ENCODE measurements at regions of chr7 and their contacts with region 1.

Region 1: DNA sequence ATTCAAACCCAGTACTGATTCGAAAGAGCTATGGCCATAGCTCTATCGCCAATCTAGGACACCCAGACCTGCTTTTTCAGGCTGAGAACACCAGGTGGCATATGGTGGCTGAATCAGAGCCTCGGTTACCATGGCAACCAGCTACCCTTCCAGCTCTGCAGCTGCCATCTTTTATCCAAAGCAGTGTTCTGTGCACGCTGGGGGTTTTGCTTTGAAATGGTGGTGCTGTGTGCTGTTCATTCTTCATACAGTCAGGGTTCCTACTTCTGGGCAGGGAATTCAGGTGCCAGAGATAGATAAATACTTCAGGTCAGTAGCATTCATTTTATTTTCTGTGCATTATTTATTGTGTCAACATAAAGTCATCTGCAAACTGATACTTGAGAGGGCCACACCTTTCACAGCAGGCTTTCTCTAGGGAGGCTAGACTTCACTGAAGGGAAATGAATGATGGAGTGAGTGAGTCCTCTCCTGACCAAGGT is 85.4 kb downstream of the AKR1D1 start:
- DNase-seq: peak; percentile 63
- ATAC-seq: peak; percentile 84

Region 2: GRCh38 chr7:138137423-138138171 is 24.0 kb before region 1 on chr7:
- intact Hi-C with region 1: no loop called
- DNase-seq: no peak
- ATAC-seq: no peak

Region 3: DNA sequence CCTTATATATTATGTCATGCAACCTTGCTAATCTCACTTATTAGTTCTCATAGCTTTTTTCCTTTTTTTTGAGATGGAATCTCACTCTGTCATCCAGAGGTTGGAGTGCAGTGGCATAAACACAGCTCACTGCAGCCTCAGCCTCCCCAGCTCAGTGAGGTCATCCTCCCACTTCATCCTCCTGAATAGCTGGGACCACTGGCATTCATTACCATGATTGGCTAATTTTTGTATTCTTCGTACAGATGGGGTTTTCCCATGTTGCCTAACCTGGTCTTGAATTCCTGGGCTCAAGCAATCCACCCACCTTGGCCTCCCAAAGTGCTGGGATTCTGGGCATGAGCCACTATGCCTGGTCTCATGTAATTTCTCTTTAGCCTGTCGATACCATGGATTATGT is 209.3 kb after region 1 on chr7:
- intact Hi-C with region 1: no loop called
- DNase-seq: no peak
- ATAC-seq: no peak

Region 4: GRCh38 chr7:138738551-138739335 is 577.1 kb after region 1 on chr7:
- intact Hi-C with region 1: loop called (anchors 5 kb)
- DNase-seq: peak; percentile 89
- ATAC-seq: peak; percentile 88